A549 (cell line): ENCODE measurements at regions of chr7 and their contacts with region 1.

Region 1: GRCh38 chr7:42671627-42672026 is 240.2 kb downstream of the C7orf25 start:
- DNase-seq: no peak
- ATAC-seq: no peak
- H3K4me3 ChIP-seq: no peak overlapping the region
- H3K27ac ChIP-seq: no peak overlapping the region
- H3K4me1 ChIP-seq: no peaks in the 10 kb centered on the region
- CTCF ChIP-seq: no peak
- EP300 ChIP-seq: no peak
- POLR2A ChIP-seq: no peak
- RAD21 ChIP-seq: no peak

Region 2: DNA sequence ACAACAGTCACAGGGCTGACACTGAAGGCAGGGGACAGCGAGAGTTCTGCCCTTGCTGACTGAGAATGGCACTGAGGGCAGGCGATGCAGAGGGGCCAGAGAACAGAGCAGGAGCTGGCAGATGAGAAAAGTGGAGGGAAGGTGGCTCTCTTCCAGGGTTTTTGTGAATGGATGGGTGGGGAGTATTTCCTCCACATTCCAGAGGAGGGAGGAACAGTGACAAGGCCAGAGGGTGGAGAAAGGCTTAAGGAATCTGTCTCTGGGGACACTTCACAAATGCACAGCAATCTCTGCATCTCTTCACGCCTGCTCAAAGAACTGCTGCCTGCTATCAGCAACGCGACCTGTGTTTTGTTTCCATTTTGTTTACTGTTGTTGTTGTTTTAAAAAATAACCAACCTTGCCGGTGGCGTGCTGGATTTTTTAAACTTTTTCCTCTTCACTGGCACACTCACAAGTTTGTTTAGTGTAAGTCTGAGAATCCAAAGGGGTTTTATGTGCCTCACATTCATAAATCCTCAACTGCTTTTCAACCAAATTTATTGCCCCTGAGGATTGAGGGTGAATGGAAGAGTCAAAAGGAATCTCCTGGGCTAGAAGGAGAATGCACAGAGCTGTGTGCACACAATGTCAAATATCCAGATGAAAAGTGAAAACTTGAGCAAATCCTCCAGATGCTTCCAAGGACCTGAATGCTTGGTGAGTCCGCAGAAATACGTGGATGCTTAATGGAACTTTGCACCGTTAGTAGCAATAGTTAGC is 564.0 kb before region 1 on chr7:
- CTCF ChIA-PET with region 1: no interaction called
- POLR2A ChIA-PET with region 1: interaction called, 10 read pairs
- DNase-seq: no peak
- ATAC-seq: no peak
- H3K4me3 ChIP-seq: no peak overlapping the region
- H3K27ac ChIP-seq: no peak overlapping the region
- H3K4me1 ChIP-seq: no peaks in the 10 kb centered on the region
- CTCF ChIP-seq: no peak
- EP300 ChIP-seq: no peak
- POLR2A ChIP-seq: no peak
- RAD21 ChIP-seq: no peak